ENCODE measurements at regions of chr3 and their contacts with region 1.

Region 1: GRCh38 chr3:141722081-141722480 is 16.0 kb upstream of the RNF7 start:
- DNase-seq: no peak
- CTCF ChIP-seq: no peak

Region 2: GRCh38 chr3:141738022-141738890 is 16.2 kb after region 1 on chr3 and contains the start of gene RNF7:
- CTCF ChIA-PET with region 1: interaction called, 10 read pairs
- POLR2A ChIA-PET with region 1: no interaction called
- DNase-seq: peak; percentile 97
- CTCF ChIP-seq: peak; percentile 87

Region 3: DNA sequence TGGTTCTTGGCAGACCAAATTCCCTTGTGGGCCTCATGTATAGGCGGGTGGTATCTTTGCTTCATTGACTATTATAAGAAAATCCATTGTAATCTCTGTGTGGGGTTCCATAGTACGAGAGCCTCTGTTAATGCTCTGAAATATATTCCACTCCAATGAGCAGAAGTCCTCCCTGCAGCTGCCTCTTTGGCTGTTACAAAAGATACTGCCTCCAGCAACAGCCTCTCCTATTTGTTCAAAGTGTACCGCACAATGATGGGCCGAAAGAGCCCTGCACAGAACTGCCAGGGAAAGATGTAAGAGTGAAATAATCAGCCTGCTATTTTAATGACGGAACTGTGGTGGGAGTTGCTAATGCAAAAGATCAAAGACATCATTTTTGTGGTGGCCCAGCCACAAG is 90.0 kb after region 1 on chr3:
- CTCF ChIA-PET with region 1: no interaction called
- POLR2A ChIA-PET with region 1: no interaction called
- DNase-seq: no peak
- CTCF ChIP-seq: no peak

Measured in GM10248 (cell line).